ENCODE measurements at regions of chr14 and their contacts with region 1.

Region 1: DNA sequence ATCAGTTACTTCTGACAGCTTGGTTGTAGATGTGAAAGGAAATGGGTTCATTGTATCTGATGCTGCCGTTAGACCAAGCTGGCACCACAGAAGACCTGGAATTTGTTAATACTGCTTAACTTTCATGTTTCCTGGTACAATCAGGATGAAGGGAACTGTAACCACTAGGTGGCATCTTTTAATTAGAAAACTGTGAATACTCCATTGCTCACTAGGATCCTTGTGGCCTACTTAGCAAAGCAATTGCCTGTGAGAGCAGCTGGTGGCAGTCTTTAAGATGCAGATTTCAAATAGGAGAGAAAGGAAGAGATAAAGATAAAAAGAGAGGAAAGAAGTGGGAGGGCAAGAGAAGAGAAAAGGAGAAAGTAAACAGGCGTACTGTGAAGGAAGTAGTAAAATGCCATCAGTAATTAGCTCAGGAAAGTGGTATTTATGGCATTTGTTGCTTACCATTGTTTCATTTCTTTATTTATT is 114.5 kb downstream of the RAD51B start:
- DNase-seq: no peak
- H3K4me3 ChIP-seq: no peak overlapping the region
- H3K27ac ChIP-seq: peak overlapping the region; percentile 36 to 65 (median 60)
- H3K4me1 ChIP-seq: peaks cover 12 to 21% (median 14%) of the 10 kb centered on the region in 4 donors
- H3K27me3 ChIP-seq: no peaks in the 10 kb centered on the region
- CTCF ChIP-seq: peak; percentile 77 to 92 (median 80)
- EP300 ChIP-seq: no peak
- POLR2A ChIP-seq: no peak

Region 2: GRCh38 chr14:68520637-68521556 is 586.9 kb after region 1 on chr14:
- intact Hi-C with region 1: loop called (anchors 10 kb)
- DNase-seq: no peak
- H3K4me3 ChIP-seq: no peak overlapping the region
- H3K27ac ChIP-seq: peak overlapping the region; percentile 75 to 80 (median 79)
- H3K4me1 ChIP-seq: peaks cover 50 to 81% (median 77%) of the 10 kb centered on the region in 4 donors
- H3K27me3 ChIP-seq: no peaks in the 10 kb centered on the region
- CTCF ChIP-seq: no peak
- EP300 ChIP-seq: no peak
- POLR2A ChIP-seq: no peak

Region 3: DNA sequence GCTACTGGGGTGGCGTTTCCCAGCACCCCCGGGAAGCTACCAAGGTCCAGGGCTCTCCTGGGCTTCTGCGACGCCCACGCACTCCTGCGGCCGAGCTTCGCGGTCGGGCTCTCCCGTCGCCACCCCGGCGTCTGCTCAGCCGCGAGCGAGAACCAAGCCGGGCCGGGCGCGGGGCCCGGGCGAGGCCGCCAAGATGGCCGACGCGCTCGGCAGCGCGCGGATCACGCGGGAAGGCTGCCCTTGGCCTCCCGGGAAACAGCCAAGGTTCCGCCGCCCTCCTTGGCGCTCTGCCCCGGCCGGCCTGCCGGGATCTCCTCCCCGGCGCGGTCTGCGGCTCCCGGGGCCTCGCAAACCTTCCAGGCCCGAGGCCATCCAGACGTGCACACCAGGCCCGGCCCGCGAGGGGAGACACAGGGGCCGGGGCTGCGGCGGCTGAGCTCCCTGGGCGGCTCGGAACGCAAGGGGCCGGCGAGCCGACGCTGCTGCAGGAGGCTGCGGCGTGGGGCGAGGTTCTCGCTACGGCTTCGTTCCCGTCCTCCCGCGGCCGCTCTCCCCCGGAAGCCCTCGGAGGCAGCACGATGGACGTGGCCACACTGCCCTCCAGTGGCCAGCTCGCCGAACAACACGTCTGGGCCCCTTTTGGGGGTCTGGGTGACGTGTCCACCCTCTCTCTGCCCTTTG is 882.4 kb after region 1 on chr14:
- intact Hi-C with region 1: loop called (anchors 2 kb)
- DNase-seq: no peak
- H3K4me3 ChIP-seq: peak overlapping the region; percentile 61 to 68 (median 63)
- H3K27ac ChIP-seq: peak overlapping the region; percentile 96 to 98 (median 97)
- H3K4me1 ChIP-seq: peaks cover 39 to 82% (median 78%) of the 10 kb centered on the region in 4 donors
- H3K27me3 ChIP-seq: no peaks in the 10 kb centered on the region
- CTCF ChIP-seq: peak; percentile 97 to 99 (median 98)
- EP300 ChIP-seq: no peak
- POLR2A ChIP-seq: no peak